ENCODE measurements at regions of chr10 and their contacts with region 1.

Region 1: DNA sequence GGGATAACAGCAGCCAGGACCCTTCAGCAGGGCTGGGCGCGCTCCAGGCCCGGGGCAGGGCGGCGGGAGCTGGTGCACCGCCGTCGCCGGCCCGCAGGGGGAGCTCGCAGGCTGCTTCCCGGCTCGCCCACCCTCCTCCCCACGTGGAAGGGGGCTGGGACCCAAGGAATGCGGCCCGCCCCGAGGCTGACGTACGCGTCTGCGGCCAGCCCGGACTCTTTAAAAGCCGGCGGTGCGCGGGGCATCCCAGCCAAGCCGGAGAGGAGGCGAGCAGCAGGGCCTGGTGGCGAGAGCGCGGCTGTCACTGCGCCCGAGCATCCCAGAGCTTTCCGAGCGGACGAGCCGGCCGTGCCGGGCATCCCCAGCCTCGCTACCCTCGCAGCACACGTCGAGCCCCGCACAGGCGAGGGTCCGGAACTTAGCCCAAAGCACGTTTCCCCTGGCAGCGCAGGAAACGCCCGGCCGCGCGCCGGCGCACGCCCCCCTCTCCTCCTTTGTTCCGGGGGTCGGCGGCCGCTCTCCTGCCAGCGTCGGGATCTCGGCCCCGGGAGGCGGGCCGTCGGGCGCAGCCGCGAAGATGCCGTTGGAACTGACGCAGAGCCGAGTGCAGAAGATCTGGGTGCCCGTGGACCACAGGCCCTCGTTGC is at the start of gene PFKFB3:
- DNase-seq: peak; percentile 97
- ATAC-seq: peak; percentile 60
- H3K4me3 Mint-ChIP-seq: peak within 1 kb of the TSS; percentile 98
- H3K27ac Mint-ChIP-seq: peak within 1 kb of the TSS; percentile 98
- H3K4me1 Mint-ChIP-seq: peaks cover 33% of the 10 kb centered on the region
- H3K27me3 Mint-ChIP-seq: no peaks in the 10 kb centered on the region
- CTCF ChIP-seq: peak; percentile 97
- total RNA-seq, gene PFKFB3: 107 to 117 TPM

Region 2: DNA sequence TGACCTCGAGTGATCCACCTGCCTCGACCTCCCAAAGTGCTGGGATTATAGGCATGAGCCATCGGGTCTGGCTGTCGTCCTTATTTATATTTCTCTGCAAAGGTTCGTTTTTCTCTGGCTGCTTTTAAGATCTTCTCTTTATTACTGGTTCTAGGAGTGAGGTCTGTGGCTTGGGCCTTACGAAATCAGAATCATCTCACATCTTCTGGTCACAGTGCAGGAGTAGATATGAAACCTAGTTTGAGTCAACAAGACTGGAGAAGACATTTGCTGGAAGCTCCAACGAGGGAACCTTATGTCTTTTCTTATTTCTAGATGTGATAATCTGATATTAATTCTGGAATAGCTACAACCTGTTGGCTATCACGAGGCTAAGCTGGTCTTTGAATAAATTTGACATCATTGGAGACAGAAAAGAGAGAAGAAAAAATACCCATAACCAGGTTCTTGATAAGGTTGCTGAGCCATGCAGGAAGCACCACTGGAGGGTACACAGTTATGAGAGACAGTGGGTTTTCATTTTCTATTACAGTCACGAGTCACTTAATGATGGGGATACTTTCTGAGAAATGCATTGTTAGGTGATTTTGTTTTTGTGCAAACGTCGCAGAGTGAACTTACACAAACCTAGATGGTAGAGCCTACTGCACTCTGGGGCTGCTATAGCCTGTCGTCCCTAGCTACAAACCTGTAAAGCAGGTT is 199.8 kb before region 1 on chr10:
- CTCF ChIA-PET with region 1: no interaction called
- POLR2A ChIA-PET with region 1: no interaction called
- intact Hi-C with region 1: no loop called
- DNase-seq: no peak
- ATAC-seq: peak; percentile 85
- H3K4me3 Mint-ChIP-seq: no peak overlapping the region
- H3K27ac Mint-ChIP-seq: no peak overlapping the region
- H3K4me1 Mint-ChIP-seq: peaks cover 15% of the 10 kb centered on the region
- H3K27me3 Mint-ChIP-seq: peaks cover 11% of the 10 kb centered on the region
- CTCF ChIP-seq: no peak

Region 3: GRCh38 chr10:6050801-6051445 is 151.9 kb before region 1 on chr10:
- CTCF ChIA-PET with region 1: interaction called, 3 read pairs
- POLR2A ChIA-PET with region 1: interaction called, 11 read pairs
- intact Hi-C with region 1: no loop called
- DNase-seq: peak; percentile 98
- ATAC-seq: peak; percentile 41
- H3K4me3 Mint-ChIP-seq: peak overlapping the region; percentile 76
- H3K27ac Mint-ChIP-seq: peak overlapping the region; percentile 91
- H3K4me1 Mint-ChIP-seq: peaks cover 84% of the 10 kb centered on the region
- H3K27me3 Mint-ChIP-seq: no peaks in the 10 kb centered on the region
- CTCF ChIP-seq: no peak

Region 4: DNA sequence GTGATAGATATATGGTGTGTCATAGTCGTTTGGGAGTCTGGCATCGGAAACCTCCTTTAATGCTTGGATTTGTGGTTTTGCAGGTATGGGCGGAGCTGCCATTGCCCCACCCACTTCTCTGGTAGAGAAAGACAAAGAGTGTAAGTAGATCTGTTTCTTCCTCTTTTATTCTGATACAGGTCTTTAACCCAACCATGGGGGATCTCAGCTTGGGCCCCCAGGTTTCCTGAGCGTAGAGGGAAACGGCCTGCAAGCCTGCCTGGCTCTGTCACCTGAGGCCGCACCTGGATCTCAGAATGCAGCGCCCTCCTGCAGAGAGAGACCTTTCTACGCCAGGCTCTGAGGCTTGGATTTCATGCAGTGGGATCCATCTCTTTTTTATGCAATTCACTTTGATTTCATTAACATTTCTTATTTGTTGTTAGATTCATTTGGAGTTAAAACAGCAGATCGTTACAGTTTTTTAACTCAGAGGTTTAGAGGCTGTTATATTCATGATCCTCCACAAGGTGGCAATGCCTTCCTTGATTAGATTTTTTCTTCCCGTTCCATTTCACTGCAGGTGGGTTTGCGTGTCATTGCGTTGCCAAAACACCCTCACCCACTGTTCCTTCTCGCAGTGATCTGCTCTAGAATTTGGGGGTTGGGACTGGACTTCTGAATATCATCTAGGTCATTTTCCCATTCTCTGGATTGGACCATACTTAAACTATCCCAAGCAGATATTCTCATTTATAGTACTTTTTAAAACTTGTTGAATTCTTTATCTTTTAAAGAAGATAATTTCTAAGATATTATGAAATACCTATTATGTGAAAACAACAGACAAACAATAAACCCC is 94.0 kb before region 1 on chr10:
- CTCF ChIA-PET with region 1: interaction called, 11 read pairs
- POLR2A ChIA-PET with region 1: interaction called, 3 read pairs
- intact Hi-C with region 1: no loop called
- DNase-seq: peak; percentile 32
- ATAC-seq: peak; percentile 76
- H3K4me3 Mint-ChIP-seq: no peak overlapping the region
- H3K27ac Mint-ChIP-seq: peak overlapping the region; percentile 86
- H3K4me1 Mint-ChIP-seq: peaks cover 36% of the 10 kb centered on the region
- H3K27me3 Mint-ChIP-seq: no peaks in the 10 kb centered on the region
- CTCF ChIP-seq: peak; percentile 93

Region 5: DNA sequence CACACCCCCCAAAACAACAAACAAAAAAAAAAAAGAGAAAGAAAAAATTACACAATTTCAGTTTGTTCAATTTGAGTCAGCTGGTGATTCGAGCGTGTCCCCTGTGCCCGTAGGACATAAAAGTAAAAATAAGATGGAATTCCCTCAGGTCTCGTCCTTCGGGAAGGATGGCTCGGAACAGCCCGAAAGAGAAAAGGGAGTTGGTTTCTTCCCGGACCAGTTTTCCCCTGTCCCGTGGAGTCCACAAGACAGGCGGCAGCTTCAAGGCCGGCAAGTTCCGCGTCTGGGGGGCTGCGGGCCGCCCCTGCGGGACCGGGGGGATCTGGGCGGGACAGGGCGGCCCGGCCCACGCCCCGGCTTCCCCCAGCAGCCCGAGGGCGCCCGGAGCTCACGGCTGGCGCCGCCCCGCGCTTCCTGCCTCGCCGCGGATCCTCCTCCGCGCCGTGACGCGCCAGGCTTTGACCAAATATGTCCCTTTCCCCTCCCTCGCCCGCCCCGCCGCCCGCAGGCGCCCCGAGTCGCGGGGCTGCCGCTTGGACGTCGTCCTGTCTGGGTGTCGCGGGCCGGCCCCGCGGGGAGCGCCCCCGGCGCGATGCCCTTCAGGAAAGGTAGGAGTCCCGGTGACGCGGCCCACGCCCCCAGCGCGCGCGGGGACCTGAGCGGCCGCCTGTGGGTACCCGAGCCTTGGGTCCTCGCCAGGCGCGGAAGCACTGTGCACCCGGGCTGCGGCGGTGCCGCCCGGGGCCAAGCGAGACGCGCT is 58.2 kb before region 1 on chr10:
- CTCF ChIA-PET with region 1: interaction called, 12 read pairs
- POLR2A ChIA-PET with region 1: interaction called, 5 read pairs
- intact Hi-C with region 1: no loop called
- DNase-seq: peak; percentile 95
- ATAC-seq: peak; percentile 84
- H3K4me3 Mint-ChIP-seq: peak overlapping the region; percentile 79
- H3K27ac Mint-ChIP-seq: peak overlapping the region; percentile 86
- H3K4me1 Mint-ChIP-seq: peaks cover 75% of the 10 kb centered on the region
- H3K27me3 Mint-ChIP-seq: no peaks in the 10 kb centered on the region
- CTCF ChIP-seq: no peak

Region 6: GRCh38 chr10:6171881-6172695 is 30.7 kb before region 1 on chr10:
- CTCF ChIA-PET with region 1: interaction called, 23 read pairs
- POLR2A ChIA-PET with region 1: interaction called, 6 read pairs
- intact Hi-C with region 1: no loop called
- DNase-seq: peak; percentile 32
- ATAC-seq: no peak
- H3K4me3 Mint-ChIP-seq: no peak overlapping the region
- H3K27ac Mint-ChIP-seq: no peak overlapping the region
- H3K4me1 Mint-ChIP-seq: peaks cover 88% of the 10 kb centered on the region
- H3K27me3 Mint-ChIP-seq: no peaks in the 10 kb centered on the region
- CTCF ChIP-seq: no peak

Region 7: DNA sequence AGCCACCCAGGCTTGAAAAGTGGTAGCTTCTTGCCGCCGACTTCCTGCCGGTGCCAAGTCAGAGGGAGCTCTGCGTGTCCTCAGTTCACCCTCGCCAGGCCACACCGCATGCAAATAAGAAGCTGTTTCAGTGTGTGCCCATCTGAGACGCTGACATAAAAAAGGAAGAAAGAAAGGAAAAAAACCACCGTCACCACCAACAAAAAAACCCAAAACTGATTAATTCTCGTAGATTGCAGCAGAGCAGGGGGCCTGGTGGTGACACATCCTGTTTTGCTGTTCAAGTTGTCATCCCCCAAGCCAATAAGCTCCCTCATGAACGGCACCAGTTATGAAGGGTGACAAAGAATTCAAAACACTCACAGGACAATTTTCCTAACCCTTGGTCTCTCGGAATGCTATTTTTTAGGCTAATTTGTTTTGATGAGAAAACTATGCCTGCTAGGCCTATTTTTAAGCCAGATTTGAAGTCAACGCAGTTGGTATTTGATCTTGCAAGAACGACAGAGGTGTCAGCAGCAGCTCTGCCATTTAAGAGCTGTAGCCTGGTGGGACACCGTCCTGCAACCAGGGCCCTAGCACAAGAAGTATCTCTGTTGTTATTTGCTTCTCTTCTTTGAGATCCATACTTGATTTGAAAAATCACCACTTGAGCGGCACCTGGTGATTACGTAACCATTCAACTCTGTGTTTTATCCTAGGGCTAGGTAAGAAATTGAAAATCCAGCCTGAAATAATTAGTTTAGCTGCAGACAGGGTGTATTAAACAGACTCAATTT is 145.5 kb after region 1 on chr10:
- CTCF ChIA-PET with region 1: interaction called, 22 read pairs
- POLR2A ChIA-PET with region 1: interaction called, 21 read pairs
- intact Hi-C with region 1: no loop called
- DNase-seq: peak; percentile 93
- ATAC-seq: peak; percentile 90
- H3K4me3 Mint-ChIP-seq: peak overlapping the region; percentile 66
- H3K27ac Mint-ChIP-seq: peak overlapping the region; percentile 99
- H3K4me1 Mint-ChIP-seq: peaks cover 56% of the 10 kb centered on the region
- H3K27me3 Mint-ChIP-seq: no peaks in the 10 kb centered on the region
- CTCF ChIP-seq: no peak